Caco-2 (cell line): ENCODE measurements at regions of chr21 and their contacts with region 1.

Region 1: DNA sequence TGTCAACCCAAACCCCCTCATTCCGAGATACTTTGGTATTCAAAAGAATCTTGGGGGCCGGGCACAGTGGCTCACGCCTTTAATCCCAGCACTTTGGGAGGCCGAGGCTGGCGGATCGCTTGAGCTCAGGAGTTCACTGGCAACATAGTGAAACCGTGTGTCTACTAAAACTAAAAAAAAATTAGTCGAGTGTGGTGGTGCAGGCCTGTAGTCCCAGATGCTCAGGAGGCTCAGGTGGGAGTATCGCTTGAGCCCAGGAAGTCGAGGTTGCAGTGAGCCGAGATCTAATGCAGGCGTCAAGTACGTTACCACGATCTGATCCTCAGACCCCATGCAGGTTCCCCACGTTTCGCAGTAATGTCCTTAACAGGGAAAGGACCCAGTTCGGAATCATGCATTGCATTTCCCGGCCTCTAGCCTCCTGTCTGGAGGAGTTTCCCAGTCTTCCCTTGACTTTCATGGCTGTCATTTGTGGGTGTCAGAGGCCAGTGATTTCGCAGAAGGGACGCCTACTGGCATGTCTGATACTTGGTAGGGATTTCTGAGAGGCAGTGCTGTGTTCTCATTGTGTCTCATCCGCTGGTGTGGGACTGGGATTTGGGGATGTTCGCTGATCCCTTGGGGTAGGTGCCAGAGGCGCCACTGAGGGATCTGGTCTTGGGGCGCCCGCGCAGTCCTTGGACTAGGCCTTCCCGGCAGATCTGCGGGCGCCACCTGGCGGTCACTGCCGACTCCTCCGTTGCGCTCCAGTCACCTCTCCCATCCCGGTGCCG is 39.3 kb upstream of the HMGN1 start:
- DNase-seq: peak; percentile 88 to 92
- H3K4me3 ChIP-seq: peak overlapping the region; percentile 50
- H3K4me3 Mint-ChIP-seq: peak overlapping the region; percentile 82
- H3K27ac Mint-ChIP-seq: peak overlapping the region; percentile 69
- H3K4me1 ChIP-seq: peaks cover 4% of the 10 kb centered on the region; the same call in 1 of the 2 replicates
- H3K4me1 Mint-ChIP-seq: no peaks in the 10 kb centered on the region
- H3K27me3 ChIP-seq: no peaks in the 10 kb centered on the region
- H3K27me3 Mint-ChIP-seq: no peaks in the 10 kb centered on the region
- CTCF ChIP-seq: peak; percentile 88 to 94

Region 2: DNA sequence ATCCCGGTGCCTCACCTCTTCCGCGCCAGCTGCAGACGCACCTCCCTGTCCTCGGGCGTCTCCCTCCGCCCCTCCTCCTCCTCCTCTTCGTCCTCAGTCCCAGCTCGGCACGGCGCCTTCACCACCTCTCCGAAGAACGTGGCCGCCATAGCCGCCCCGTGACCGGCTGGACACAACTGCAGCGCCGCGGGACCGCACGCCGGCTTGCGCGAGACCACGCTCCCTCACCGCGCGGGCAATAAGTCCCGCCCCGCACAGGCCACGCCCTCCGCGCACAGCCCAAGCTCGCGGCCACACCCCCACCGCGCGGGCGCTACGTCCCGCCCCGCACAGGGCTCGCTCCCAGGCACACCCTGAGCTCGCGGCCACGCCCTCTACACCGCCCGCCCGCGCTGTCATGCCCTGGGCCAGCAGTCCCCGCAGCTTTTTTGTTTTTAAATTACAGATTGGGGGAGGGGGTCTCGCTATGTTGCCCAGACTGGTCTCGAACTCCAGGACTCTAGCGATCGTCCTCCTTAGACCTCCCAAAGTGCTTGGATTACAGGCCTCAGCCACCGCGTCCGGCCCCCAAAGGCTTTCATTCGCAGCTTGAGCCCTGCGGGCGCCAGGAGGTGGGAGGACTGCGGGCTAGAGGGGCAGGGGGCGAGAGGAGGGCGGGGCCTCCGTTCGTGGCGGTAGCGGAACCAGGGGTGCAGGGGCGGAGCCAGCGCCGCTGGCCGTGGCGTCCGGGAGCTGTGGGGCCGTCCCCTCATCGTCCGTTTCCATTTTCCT is 204.8 kb before region 1 on chr21 and contains the start of gene PSMG1:
- CTCF ChIA-PET with region 1: no interaction called
- POLR2A ChIA-PET with region 1: no interaction called
- intact Hi-C with region 1: loop called (anchors 5 kb)
- DNase-seq: peak; percentile 94 to 95
- H3K4me3 ChIP-seq: peak within 1 kb of the TSS; percentile 99
- H3K4me3 Mint-ChIP-seq: peak within 1 kb of the TSS; percentile 93
- H3K27ac Mint-ChIP-seq: peak within 1 kb of the TSS; percentile 97
- H3K4me1 ChIP-seq: 0 out of 2 replicates have a peak, but pooled peaks cover 6% of the 10 kb centered on the region
- H3K4me1 Mint-ChIP-seq: no peaks in the 10 kb centered on the region
- H3K27me3 ChIP-seq: no peaks in the 10 kb centered on the region
- H3K27me3 Mint-ChIP-seq: no peaks in the 10 kb centered on the region
- CTCF ChIP-seq: no peak
- total RNA-seq, gene PSMG1: 86.2 and 95.3 TPM in 2 replicates

Region 3: DNA sequence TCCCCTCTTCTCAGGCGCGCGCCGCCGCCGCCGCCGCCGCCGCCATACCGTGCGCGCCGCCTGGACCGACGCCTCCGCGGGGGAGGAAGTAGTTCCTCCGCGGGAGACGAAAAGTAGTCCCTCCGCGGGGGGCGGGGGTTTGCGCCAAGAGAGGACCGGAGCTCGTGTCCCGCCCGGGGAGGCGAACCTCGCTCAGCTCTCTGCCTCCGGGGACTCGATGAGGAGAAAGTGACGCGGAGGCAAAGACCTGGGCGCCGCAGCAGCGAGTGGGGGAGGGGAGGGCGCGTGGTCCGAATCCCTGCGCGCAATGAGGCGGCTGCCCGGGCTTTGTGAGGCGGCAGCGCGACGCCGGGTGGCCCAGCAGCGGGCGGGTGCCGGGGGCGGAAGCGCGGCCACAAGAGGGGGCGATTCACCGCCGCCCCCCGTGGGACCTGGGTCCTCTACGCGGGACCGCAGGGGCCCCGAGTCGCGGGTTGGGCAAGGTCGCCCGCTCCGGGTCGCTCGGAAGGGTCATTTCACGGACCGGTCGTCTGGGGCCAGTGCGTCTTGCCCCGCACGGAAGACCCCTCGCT is 74.6 kb before region 1 on chr21 and contains the start of gene BRWD1:
- CTCF ChIA-PET with region 1: no interaction called
- POLR2A ChIA-PET with region 1: interaction called, 5 read pairs
- intact Hi-C with region 1: loop called (anchors 2 kb)
- DNase-seq: peak; percentile 90 to 92
- H3K4me3 ChIP-seq: peak within 1 kb of the TSS; percentile 86
- H3K4me3 Mint-ChIP-seq: peak within 1 kb of the TSS; percentile 97
- H3K27ac Mint-ChIP-seq: peak within 1 kb of the TSS; percentile 89
- H3K4me1 ChIP-seq: peaks cover 26% of the 10 kb centered on the region
- H3K4me1 Mint-ChIP-seq: peaks cover 21% of the 10 kb centered on the region
- H3K27me3 ChIP-seq: no peaks in the 10 kb centered on the region
- H3K27me3 Mint-ChIP-seq: no peaks in the 10 kb centered on the region
- CTCF ChIP-seq: peak; percentile 28 to 29
- total RNA-seq, gene BRWD1: 37.1 and 42.2 TPM in 2 replicates

Region 4: GRCh38 chr21:39349211-39350093 is 38.8 kb before region 1 on chr21:
- CTCF ChIA-PET with region 1: interaction called, 7 read pairs
- POLR2A ChIA-PET with region 1: interaction called, 19 read pairs
- intact Hi-C with region 1: loop called (anchors 2 kb)
- DNase-seq: peak; percentile 98 to 99
- H3K4me3 ChIP-seq: peak overlapping the region; percentile 68
- H3K4me3 Mint-ChIP-seq: peak overlapping the region; percentile 96
- H3K27ac Mint-ChIP-seq: peak overlapping the region; percentile 99
- H3K4me1 ChIP-seq: peaks cover 6% of the 10 kb centered on the region
- H3K4me1 Mint-ChIP-seq: peaks cover 23% of the 10 kb centered on the region
- H3K27me3 ChIP-seq: no peaks in the 10 kb centered on the region
- H3K27me3 Mint-ChIP-seq: no peaks in the 10 kb centered on the region
- CTCF ChIP-seq: no peak

Region 5: DNA sequence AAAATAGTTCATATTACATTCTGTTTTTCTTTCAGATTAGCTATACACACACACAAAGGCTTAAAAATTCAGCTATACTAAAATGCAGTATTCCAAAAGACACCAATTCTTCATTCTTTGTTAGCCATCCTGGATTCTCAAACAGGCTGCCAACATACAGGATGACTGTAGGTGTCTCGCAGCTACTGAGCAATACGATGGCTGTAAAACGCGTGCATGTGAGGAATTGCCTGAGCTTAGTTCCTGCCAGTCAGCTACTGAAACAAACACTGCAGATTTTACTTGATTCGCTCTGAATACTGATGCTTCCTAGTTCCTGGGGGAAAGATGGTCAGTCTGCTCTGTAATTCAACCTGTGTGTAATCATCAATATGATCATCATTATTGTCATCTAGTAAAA is 14.6 kb before region 1 on chr21:
- CTCF ChIA-PET with region 1: interaction called, 44 read pairs
- POLR2A ChIA-PET with region 1: interaction called, 8 read pairs
- intact Hi-C with region 1: loop called (anchors 1 kb)
- DNase-seq: peak; percentile 56
- H3K4me3 ChIP-seq: no peak overlapping the region
- H3K4me3 Mint-ChIP-seq: peak overlapping the region; percentile 38
- H3K27ac Mint-ChIP-seq: no peak overlapping the region
- H3K4me1 ChIP-seq: no peaks in the 10 kb centered on the region
- H3K4me1 Mint-ChIP-seq: peaks cover 6% of the 10 kb centered on the region
- H3K27me3 ChIP-seq: no peaks in the 10 kb centered on the region
- H3K27me3 Mint-ChIP-seq: no peaks in the 10 kb centered on the region
- CTCF ChIP-seq: peak in 1 of 2 experiments; percentile 66

Region 6: DNA sequence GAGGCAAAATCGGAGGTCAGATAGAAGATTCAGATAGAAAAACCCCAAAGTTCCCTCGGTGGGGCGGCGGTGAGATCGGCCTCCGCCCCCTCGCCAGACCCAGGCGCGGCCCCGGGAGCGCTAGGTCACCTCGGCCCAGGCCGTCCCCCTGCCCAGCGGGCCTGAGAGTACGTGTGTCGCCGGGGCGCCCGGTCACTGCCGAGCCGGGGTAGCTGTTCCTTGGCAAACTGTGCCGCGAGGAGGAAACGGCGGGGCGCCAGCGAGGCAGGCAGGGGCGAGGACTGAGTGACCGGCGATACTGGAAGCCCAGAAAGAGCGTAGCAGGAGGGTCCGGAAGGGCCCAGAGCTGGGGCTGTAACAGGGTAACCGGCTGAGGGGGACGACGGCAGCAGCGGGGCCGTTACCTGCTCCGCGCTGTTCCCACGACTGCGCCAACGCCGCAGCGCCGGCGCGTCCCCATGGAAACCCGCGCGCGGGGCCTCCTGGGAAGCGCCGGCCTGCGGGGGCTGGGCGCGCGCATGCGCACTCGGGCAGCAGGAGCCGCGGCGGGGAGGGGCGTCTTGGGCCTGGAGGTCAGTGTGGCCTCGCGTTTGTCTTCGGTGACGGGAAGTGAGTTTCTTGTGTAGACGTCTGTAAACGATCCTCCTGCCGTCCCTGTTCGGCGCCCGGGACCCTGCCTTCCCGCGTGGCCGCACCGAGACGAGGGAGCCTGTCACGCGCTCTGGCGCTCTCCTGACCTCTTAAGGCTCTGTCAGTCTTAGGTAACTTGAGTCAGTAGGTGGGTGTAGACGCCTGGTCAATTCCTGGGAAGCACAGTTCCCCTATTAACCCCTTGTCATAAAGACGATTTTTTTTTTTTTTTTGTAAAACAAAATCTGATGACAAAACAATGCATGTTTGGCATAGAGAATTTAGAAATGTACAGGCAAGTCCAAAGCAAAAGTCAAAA is 57.4 kb after region 1 on chr21 and contains the start of gene LCA5L:
- CTCF ChIA-PET with region 1: interaction called, 8 read pairs
- POLR2A ChIA-PET with region 1: no interaction called
- intact Hi-C with region 1: loop called (anchors 5 kb)
- DNase-seq: peak; percentile 93 to 96
- H3K4me3 ChIP-seq: peak within 1 kb of the TSS; percentile 73
- H3K4me3 Mint-ChIP-seq: peak within 1 kb of the TSS; percentile 98
- H3K27ac Mint-ChIP-seq: peak within 1 kb of the TSS; percentile 94
- H3K4me1 ChIP-seq: peaks cover 7% of the 10 kb centered on the region
- H3K4me1 Mint-ChIP-seq: peaks cover 8% of the 10 kb centered on the region
- H3K27me3 ChIP-seq: no peaks in the 10 kb centered on the region
- H3K27me3 Mint-ChIP-seq: peaks cover 6% of the 10 kb centered on the region
- CTCF ChIP-seq: no peak
- total RNA-seq, gene LCA5L: 0.44 and 0.61 TPM in 2 replicates

Region 7: DNA sequence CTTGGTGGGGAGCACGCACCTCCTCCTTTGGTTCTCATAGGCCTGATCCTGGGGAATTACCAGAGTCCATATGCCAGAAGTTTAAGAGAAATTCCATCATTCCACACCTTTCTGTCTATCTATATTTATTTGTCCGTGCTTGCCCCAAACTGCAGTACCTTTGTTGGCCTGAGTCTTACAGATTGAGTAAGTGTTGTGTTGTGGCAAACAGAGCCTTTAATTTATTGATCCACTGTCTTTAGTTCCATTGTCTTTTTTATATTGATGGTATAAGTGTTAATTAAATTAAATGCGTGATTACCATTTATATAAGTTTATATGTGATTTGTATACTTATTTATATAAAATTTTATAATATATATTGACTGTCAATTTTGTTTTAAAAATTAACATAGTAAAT is 68.4 kb after region 1 on chr21:
- CTCF ChIA-PET with region 1: no interaction called
- POLR2A ChIA-PET with region 1: no interaction called
- intact Hi-C with region 1: no loop called
- DNase-seq: no peak
- H3K4me3 ChIP-seq: no peak overlapping the region
- H3K4me3 Mint-ChIP-seq: no peak overlapping the region
- H3K27ac Mint-ChIP-seq: no peak overlapping the region
- H3K4me1 ChIP-seq: no peaks in the 10 kb centered on the region
- H3K4me1 Mint-ChIP-seq: peaks cover 7% of the 10 kb centered on the region
- H3K27me3 ChIP-seq: no peaks in the 10 kb centered on the region
- H3K27me3 Mint-ChIP-seq: peaks cover 4% of the 10 kb centered on the region
- CTCF ChIP-seq: peak in 1 of 2 experiments; percentile 27

Region 8: DNA sequence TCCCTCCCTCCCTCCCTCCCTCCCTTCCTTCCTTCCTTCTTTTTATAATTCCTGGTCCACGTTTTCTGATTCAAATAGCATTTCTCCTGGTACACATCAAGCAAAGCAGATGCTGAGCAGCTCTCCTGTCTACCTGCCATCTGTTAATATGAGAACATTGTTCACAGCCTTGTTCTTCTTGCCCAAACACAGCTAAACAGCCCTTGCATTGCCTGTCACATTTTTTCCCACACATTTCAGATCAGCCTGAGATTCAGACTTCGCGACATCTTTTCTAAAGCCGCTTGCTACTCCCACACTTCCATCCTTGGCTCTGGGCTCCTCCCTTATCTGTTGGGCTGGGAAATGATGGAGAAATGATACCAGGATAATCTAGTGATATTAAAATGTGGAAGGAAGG is 679.5 kb after region 1 on chr21:
- CTCF ChIA-PET with region 1: no interaction called
- POLR2A ChIA-PET with region 1: no interaction called
- intact Hi-C with region 1: no loop called
- DNase-seq: no peak
- H3K4me3 ChIP-seq: no peak overlapping the region
- H3K4me3 Mint-ChIP-seq: no peak overlapping the region
- H3K27ac Mint-ChIP-seq: no peak overlapping the region
- H3K4me1 ChIP-seq: no peaks in the 10 kb centered on the region
- H3K4me1 Mint-ChIP-seq: no peaks in the 10 kb centered on the region
- H3K27me3 ChIP-seq: no peaks in the 10 kb centered on the region
- H3K27me3 Mint-ChIP-seq: peaks cover 24% of the 10 kb centered on the region
- CTCF ChIP-seq: no peak